CD8-positive, alpha-beta T cell (primary cell): ENCODE measurements at regions of chr13 and their contacts with region 1.

Region 1: DNA sequence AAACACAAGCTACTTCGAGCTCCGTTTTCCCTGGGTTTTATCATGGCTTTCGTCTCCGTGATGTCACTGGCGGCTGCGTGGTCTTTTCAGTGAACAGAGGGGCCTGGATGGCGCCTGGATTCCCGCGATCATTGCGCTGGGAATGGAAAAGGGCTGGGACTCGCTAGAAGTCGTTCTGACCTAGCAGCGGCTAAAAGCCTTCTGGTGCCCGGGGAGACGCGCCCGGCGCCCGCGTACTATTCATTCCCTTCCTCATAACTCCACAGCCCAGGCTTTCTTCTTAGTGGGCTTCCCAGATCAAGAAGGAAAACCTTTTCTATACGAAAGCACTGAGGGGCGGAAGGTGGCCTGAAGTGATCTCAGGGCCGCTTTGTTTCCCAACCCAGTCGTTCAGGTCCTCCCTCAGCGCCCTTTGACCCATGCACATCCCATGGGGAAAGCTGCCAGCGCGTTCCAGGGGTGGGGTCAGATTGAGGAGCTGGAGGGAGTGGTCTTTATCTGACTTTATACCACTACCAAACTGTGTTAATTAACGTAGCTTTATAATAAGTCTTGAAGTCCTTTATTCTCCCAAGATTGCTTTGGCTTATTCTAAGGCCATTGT is 96.6 kb downstream of the ELF1 start:
- DNase-seq: peak in 2 of 9 experiments; percentile 17 to 30
- ATAC-seq: no peak
- H3K4me3 ChIP-seq: no peak overlapping the region
- H3K4me3 Mint-ChIP-seq: peak overlapping the region; percentile 59
- H3K27ac ChIP-seq: no peak overlapping the region
- H3K27ac Mint-ChIP-seq: peak overlapping the region; percentile 82
- H3K4me1 ChIP-seq: peaks cover 8% of the 10 kb centered on the region
- H3K4me1 Mint-ChIP-seq: peaks cover 27% of the 10 kb centered on the region
- H3K27me3 ChIP-seq: no peaks in the 10 kb centered on the region
- H3K27me3 Mint-ChIP-seq: no peaks in the 10 kb centered on the region
- CTCF ChIP-seq: no peak

Region 2: DNA sequence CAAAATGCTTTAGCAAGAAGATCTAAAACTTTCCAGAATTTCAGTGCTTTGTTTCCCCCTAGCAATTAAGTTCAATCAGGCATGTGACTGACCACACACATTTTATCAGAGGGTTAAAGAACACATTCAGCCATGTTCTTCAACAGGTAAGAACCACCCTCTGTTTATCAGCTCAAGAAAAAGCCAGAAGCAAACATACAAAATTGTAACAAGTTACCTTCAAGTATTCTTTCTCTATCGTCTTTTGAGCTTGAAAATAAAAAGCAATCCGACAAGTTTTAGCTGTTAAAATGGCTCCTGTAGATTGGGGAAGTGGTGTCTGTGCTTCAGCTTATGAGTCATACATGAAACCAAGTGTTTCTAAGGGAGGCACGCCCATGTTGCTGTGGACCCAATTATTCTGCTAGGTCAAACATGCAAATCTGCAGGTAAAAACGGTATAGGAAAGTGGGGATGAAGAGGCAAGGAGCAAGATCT is 96.5 kb after region 1 on chr13 and contains the start of gene ELF1:
- CTCF ChIA-PET with region 1: no interaction called
- POLR2A ChIA-PET with region 1: interaction called, 6 read pairs
- intact Hi-C with region 1: loop called in 1 of 2 experiments (anchors 1 kb)
- DNase-seq: peak in 8 of 9 experiments; percentile 28 to 89 (median 63)
- ATAC-seq: peak; percentile 88
- H3K4me3 ChIP-seq: peak within 1 kb of the TSS; percentile 56 to 68
- H3K4me3 Mint-ChIP-seq: peak within 1 kb of the TSS; percentile 88
- H3K27ac ChIP-seq: peak within 1 kb of the TSS; percentile 91 to 95
- H3K27ac Mint-ChIP-seq: peak within 1 kb of the TSS; percentile 97
- H3K4me1 ChIP-seq: peaks cover 25% of the 10 kb centered on the region
- H3K4me1 Mint-ChIP-seq: peaks cover 47% of the 10 kb centered on the region
- H3K27me3 ChIP-seq: no peaks in the 10 kb centered on the region
- H3K27me3 Mint-ChIP-seq: no peaks in the 10 kb centered on the region
- CTCF ChIP-seq: no peak
- total RNA-seq, gene ELF1: 308 to 313 TPM

Region 3: GRCh38 chr13:41263261-41264027 is 340.9 kb after region 1 on chr13 and contains the start of gene MTRF1:
- CTCF ChIA-PET with region 1: no interaction called
- POLR2A ChIA-PET with region 1: no interaction called
- intact Hi-C with region 1: loop called (anchors 1 to 2 kb)
- DNase-seq: peak; percentile 65 to 91 (median 82)
- ATAC-seq: peak; percentile 90
- H3K4me3 ChIP-seq: peak within 1 kb of the TSS; percentile 68 to 72
- H3K4me3 Mint-ChIP-seq: peak within 1 kb of the TSS; percentile 99
- H3K27ac ChIP-seq: peak within 1 kb of the TSS; percentile 73 to 84
- H3K27ac Mint-ChIP-seq: peak within 1 kb of the TSS; percentile 99
- H3K4me1 ChIP-seq: peaks cover 26% of the 10 kb centered on the region
- H3K4me1 Mint-ChIP-seq: peaks cover 40% of the 10 kb centered on the region
- H3K27me3 ChIP-seq: no peaks in the 10 kb centered on the region
- H3K27me3 Mint-ChIP-seq: no peaks in the 10 kb centered on the region
- CTCF ChIP-seq: no peak
- total RNA-seq, gene MTRF1: 26.2 to 26.9 TPM